IMR-90 (cell line): ENCODE measurements at regions of chr11 and their contacts with region 1.

Region 1: DNA sequence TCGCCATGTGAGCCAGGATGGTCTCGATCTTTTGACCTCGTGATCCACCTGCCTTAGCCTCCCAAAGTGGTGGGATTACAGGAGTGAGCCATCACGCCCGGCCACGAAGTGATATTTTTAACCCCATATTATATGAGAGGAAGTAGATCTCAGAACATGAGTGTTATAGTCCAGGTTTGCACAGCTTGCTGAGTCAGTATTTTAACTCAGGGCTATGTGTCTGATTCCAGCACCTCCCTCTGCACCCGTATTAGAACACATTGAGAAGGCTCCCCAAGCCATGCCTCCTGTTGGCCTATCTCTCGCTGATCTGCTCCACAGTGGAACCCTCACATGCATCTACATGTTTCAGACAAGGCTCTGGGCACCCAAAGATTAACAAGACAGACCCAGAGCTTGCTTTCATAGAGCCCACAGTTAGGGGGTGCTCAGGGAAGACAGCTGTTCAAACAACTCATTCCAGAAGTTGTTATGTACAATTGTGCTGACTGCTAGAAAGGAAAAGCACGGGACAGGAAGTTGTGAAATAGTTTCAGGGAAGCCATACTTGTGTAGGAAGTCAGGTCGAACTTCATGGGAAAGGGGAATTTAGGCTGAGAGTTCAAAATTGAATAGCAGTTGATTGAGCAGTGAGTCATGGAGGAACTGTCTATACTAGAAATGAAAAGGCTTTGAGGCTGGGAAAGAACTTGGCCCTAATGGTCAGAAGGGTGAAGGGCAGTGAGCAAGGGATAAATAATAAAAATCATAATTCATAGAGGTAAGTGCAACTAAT is 49.3 kb upstream of the CLPB start:
- DNase-seq: peak; percentile 50
- ATAC-seq: no peak
- H3K4me3 ChIP-seq: no peak overlapping the region
- H3K27ac ChIP-seq: no peak overlapping the region
- H3K4me1 ChIP-seq: peaks cover 2% of the 10 kb centered on the region; the same call in 1 of the 2 replicates
- H3K27me3 ChIP-seq: peaks cover 30% of the 10 kb centered on the region
- CTCF ChIP-seq: no peak
- POLR2A ChIP-seq: no peak
- RAD21 ChIP-seq: no peak

Region 2: DNA sequence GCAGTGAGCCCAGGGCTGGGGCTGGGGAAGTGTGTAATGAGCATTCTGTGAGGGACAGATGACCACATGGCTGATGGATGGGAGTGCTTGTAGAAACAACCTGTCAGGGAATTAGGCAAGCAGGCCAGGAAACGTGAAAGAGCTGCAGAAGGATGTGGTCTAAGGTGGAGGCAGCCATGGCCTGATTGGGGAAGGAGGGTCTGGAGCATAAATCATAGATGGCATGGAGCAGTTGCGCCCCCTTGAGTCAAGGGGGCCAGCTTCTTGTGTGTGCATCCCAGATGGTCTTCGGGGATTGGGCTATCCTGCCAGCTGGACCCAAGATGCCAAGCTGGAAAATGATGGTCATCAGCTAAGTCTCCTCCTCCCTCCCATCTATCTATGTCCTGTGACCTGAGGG is 70.1 kb after region 1 on chr11:
- CTCF ChIA-PET with region 1: interaction called, 12 read pairs
- POLR2A ChIA-PET with region 1: no interaction called
- dilution Hi-C with region 1: no loop called
- in situ Hi-C with region 1: no loop called
- intact Hi-C with region 1: no loop called
- DNase-seq: no peak
- ATAC-seq: no peak
- H3K4me3 ChIP-seq: no peak overlapping the region
- H3K27ac ChIP-seq: no peak overlapping the region
- H3K4me1 ChIP-seq: no peaks in the 10 kb centered on the region
- H3K27me3 ChIP-seq: peaks cover 33% of the 10 kb centered on the region
- CTCF ChIP-seq: no peak
- POLR2A ChIP-seq: no peak
- RAD21 ChIP-seq: no peak